ENCODE measurements at regions of chr3 and their contacts with region 1.

Region 1: GRCh38 chr3:100254168-100254777 is 6.5 kb upstream of the TBC1D23 start:
- DNase-seq: peak; percentile 73
- ATAC-seq: peak; percentile 97
- H3K4me3 ChIP-seq: no peak overlapping the region
- H3K27ac ChIP-seq: no peak overlapping the region
- H3K4me1 ChIP-seq: no peaks in the 10 kb centered on the region
- H3K27me3 ChIP-seq: no peaks in the 10 kb centered on the region
- CTCF ChIP-seq: peak; percentile 76; a peak in 5 of 6 replicates
- POLR2A ChIP-seq: no peak
- RAD21 ChIP-seq: peak; percentile 93

Region 2: DNA sequence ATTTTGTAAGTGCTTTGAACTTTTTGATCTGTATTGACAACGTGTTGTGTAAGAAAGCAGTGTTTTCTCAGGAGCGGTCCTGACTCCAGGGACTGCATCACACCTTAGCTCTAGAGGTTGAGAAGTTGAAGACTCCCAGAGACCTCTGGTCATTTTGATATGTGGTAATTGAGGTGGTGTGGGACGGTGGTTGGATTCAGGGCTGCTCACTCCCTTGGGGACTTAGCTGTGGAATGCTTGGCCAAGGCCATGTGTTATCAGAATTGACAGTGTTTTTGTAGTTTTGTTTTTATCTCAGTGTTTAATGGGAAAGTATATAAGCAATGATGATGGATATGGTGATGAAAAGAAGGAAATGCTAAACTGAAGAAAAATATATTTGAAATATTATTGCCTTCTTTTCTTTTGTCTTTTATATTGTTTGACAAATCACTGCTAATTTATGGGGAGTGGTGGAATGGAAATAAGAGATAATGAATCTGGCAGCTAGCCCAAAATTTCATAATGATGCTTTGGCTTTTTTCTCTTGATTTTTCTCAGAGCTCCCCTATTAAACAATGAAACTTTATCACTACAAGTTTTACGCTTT is 420.6 kb before region 1 on chr3:
- CTCF ChIA-PET with region 1: interaction called, 58 read pairs
- POLR2A ChIA-PET with region 1: interaction called, 4 read pairs
- RAD21 ChIA-PET with region 1: interaction called, 11 to 12 read pairs
- intact Hi-C with region 1: loop called (anchors 1 kb)
- DNase-seq: no peak
- ATAC-seq: no peak
- H3K4me3 ChIP-seq: no peak overlapping the region
- H3K27ac ChIP-seq: no peak overlapping the region
- H3K4me1 ChIP-seq: no peaks in the 10 kb centered on the region
- H3K27me3 ChIP-seq: no peaks in the 10 kb centered on the region
- CTCF ChIP-seq: no peak
- POLR2A ChIP-seq: no peak
- RAD21 ChIP-seq: no peak

Region 3: DNA sequence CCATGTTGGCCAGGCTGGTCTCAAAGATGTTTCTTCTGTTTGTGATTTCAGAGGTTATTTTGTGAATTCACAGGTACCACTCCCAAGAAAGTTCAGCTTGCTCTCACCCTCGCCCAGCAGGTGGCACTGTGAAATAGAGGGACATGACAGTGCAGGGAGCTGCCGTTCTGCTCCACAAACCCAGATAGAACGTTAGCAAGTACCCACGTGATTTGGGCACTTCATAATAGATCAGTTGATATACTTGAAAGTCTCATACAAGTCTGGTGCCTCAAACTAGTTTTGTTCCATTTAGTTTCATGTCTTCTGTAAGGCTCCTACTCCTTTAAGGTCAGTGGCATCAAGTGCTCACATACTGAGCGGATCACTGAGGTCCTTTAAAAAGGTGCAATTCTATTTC is 185.4 kb before region 1 on chr3:
- CTCF ChIA-PET with region 1: interaction called, 34 read pairs
- POLR2A ChIA-PET with region 1: interaction called, 5 read pairs
- RAD21 ChIA-PET with region 1: interaction called in 1 of 2 experiments, 9 read pairs
- intact Hi-C with region 1: loop called (anchors 1 kb)
- DNase-seq: peak; percentile 47
- ATAC-seq: peak; percentile 100
- H3K4me3 ChIP-seq: no peak overlapping the region
- H3K27ac ChIP-seq: no peak overlapping the region
- H3K4me1 ChIP-seq: peaks cover 0 to 3% of the 10 kb centered on the region in 2 experiments; a peak in 1 of 4 replicates
- H3K27me3 ChIP-seq: no peaks in the 10 kb centered on the region
- CTCF ChIP-seq: peak; percentile 33 to 84 (median 77); a peak in 5 of 6 replicates
- POLR2A ChIP-seq: no peak
- RAD21 ChIP-seq: peak; percentile 70

Region 4: GRCh38 chr3:101913173-101913572 is 1658.9 kb after region 1 on chr3:
- CTCF ChIA-PET with region 1: no interaction called
- POLR2A ChIA-PET with region 1: no interaction called
- RAD21 ChIA-PET with region 1: no interaction called
- intact Hi-C with region 1: no loop called
- DNase-seq: no peak
- ATAC-seq: no peak
- H3K4me3 ChIP-seq: no peak overlapping the region
- H3K27ac ChIP-seq: no peak overlapping the region
- H3K4me1 ChIP-seq: no peaks in the 10 kb centered on the region
- H3K27me3 ChIP-seq: no peaks in the 10 kb centered on the region
- CTCF ChIP-seq: no peak
- POLR2A ChIP-seq: no peak
- RAD21 ChIP-seq: no peak